B cell (primary cell): ENCODE measurements at regions of chr18 and their contacts with region 1.

Region 1: DNA sequence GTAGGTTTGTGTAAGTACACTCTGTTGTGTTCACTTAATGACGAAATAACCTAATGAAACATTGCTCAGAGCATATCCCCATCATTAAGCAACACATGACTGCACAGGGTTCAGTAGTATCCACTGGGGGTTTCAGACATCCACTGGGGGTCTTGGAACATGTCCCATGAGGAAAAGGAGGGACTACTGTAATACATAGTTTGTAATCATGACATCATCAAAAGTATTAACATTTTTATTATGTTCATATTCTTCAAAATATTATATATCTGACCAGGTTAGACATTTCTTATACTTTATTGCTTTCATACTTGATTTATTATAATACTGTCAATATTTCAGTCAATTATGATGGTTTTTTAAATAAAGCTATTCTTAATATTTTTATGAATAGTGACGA is 54.4 kb upstream of the EMILIN2 start:
- DNase-seq: no peak
- ATAC-seq: no peak
- H3K4me3 ChIP-seq: no peak overlapping the region
- H3K4me3 Mint-ChIP-seq: no peak overlapping the region
- H3K27ac ChIP-seq: no peak overlapping the region
- H3K27ac Mint-ChIP-seq: no peak overlapping the region
- H3K4me1 ChIP-seq: no peaks in the 10 kb centered on the region
- H3K4me1 Mint-ChIP-seq: peaks cover 3% of the 10 kb centered on the region
- H3K27me3 ChIP-seq: no peaks in the 10 kb centered on the region
- H3K27me3 Mint-ChIP-seq: no peaks in the 10 kb centered on the region
- CTCF ChIP-seq: no peak

Region 2: GRCh38 chr18:2736823-2737222 is 55.6 kb before region 1 on chr18:
- CTCF ChIA-PET with region 1: no interaction called
- POLR2A ChIA-PET with region 1: no interaction called
- intact Hi-C with region 1: no loop called
- DNase-seq: no peak
- ATAC-seq: no peak
- H3K4me3 ChIP-seq: no peak overlapping the region
- H3K4me3 Mint-ChIP-seq: no peak overlapping the region
- H3K27ac ChIP-seq: no peak overlapping the region
- H3K27ac Mint-ChIP-seq: no peak overlapping the region
- H3K4me1 ChIP-seq: no peaks in the 10 kb centered on the region
- H3K4me1 Mint-ChIP-seq: no peaks in the 10 kb centered on the region
- H3K27me3 ChIP-seq: no peaks in the 10 kb centered on the region
- H3K27me3 Mint-ChIP-seq: no peaks in the 10 kb centered on the region
- CTCF ChIP-seq: no peak

Region 3: GRCh38 chr18:2776601-2777000 is 15.8 kb before region 1 on chr18:
- CTCF ChIA-PET with region 1: no interaction called
- POLR2A ChIA-PET with region 1: no interaction called
- intact Hi-C with region 1: loop called (anchors 2 kb)
- DNase-seq: no peak
- ATAC-seq: no peak
- H3K4me3 ChIP-seq: no peak overlapping the region
- H3K4me3 Mint-ChIP-seq: no peak overlapping the region
- H3K27ac ChIP-seq: peak overlapping the region in 1 of 2 donors; percentile 7
- H3K27ac Mint-ChIP-seq: no peak overlapping the region
- H3K4me1 ChIP-seq: no peaks in the 10 kb centered on the region
- H3K4me1 Mint-ChIP-seq: no peaks in the 10 kb centered on the region
- H3K27me3 ChIP-seq: no peaks in the 10 kb centered on the region
- H3K27me3 Mint-ChIP-seq: no peaks in the 10 kb centered on the region
- CTCF ChIP-seq: no peak

Region 4: DNA sequence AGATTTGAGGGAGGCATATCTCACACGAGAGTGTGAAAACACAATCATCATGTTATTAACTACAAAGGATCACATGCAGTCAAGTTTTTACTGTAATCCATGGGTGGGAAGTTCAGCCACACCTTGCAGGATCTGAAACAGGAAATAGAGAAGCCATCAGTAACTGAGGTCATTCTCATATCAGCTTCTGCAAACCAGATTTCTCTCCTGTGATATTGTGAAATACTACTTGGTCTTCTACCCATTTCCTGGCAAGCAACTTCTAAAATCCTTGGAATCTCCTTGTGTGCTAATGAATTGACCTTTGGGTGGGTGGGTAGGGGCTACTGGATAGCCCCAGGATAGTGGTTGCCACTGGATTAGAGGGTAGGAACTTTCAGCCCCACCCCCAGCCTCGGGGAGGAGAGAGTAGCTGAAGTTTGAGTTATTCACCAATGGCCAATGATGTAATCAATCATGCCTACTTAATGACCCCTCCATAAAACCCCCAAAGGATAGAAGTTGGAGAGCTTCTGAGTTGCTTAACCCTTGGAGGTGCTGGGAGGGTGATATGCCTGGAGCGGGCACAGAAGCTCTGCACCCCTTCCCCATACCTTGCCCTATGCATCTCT is 632.0 kb after region 1 on chr18:
- CTCF ChIA-PET with region 1: no interaction called
- POLR2A ChIA-PET with region 1: no interaction called
- intact Hi-C with region 1: no loop called
- DNase-seq: no peak
- ATAC-seq: no peak
- H3K4me3 ChIP-seq: no peak overlapping the region
- H3K4me3 Mint-ChIP-seq: no peak overlapping the region
- H3K27ac ChIP-seq: no peak overlapping the region
- H3K27ac Mint-ChIP-seq: no peak overlapping the region
- H3K4me1 ChIP-seq: peaks cover 0 to 3% of the 10 kb centered on the region in 2 donors
- H3K4me1 Mint-ChIP-seq: peaks cover 4% of the 10 kb centered on the region
- H3K27me3 ChIP-seq: no peaks in the 10 kb centered on the region
- H3K27me3 Mint-ChIP-seq: no peaks in the 10 kb centered on the region
- CTCF ChIP-seq: no peak